ENCODE measurements at regions of chr1 and their contacts with region 1.

Region 1: GRCh38 chr1:184866991-184867788 is 107.1 kb downstream of the NIBAN1 start:
- DNase-seq: peak; percentile 98
- H3K4me3 ChIP-seq: no peak overlapping the region
- H3K27ac ChIP-seq: no peak overlapping the region
- H3K4me1 ChIP-seq: peaks cover 15% of the 10 kb centered on the region
- H3K27me3 ChIP-seq: peaks cover 29% of the 10 kb centered on the region
- CTCF ChIP-seq: no peak

Region 2: DNA sequence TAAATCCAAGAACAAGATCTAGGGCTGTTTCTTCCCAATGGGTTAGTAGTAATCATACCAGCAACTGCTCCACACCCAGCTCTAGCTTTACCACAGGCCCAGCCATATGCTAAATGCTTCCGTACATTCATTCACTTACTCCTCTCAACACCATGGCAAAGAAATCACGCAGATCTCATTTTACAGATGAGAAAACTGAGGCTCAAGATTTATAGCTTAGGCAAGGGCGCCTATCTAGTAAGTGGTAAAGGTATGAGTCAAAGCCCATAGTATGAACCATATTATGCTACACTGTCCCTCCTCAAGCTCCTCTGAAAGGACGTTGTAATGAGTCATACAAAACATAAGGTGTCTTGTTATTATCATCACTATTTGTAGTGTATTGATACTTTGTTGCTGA is 24.9 kb after region 1 on chr1:
- CTCF ChIA-PET with region 1: no interaction called
- dilution Hi-C with region 1: no loop called
- in situ Hi-C with region 1: no loop called
- intact Hi-C with region 1: loop called (anchors 2 kb)
- DNase-seq: peak; percentile 56
- H3K4me3 ChIP-seq: no peak overlapping the region
- H3K27ac ChIP-seq: no peak overlapping the region
- H3K4me1 ChIP-seq: peaks cover 34% of the 10 kb centered on the region
- H3K27me3 ChIP-seq: no peaks in the 10 kb centered on the region
- CTCF ChIP-seq: no peak

Region 3: GRCh38 chr1:184954231-184954995 is 87.2 kb after region 1 on chr1:
- CTCF ChIA-PET with region 1: no interaction called
- dilution Hi-C with region 1: no loop called
- in situ Hi-C with region 1: no loop called
- intact Hi-C with region 1: loop called (anchors 5 kb)
- DNase-seq: peak; percentile 54
- H3K4me3 ChIP-seq: peak overlapping the region in 2 of 3 experiments; percentile 5 to 16
- H3K27ac ChIP-seq: peak overlapping the region; percentile 95
- H3K4me1 ChIP-seq: peaks cover 20% of the 10 kb centered on the region
- H3K27me3 ChIP-seq: no peaks in the 10 kb centered on the region
- CTCF ChIP-seq: no peak